ENCODE measurements at regions of chr7 and their contacts with region 1.

Region 1: DNA sequence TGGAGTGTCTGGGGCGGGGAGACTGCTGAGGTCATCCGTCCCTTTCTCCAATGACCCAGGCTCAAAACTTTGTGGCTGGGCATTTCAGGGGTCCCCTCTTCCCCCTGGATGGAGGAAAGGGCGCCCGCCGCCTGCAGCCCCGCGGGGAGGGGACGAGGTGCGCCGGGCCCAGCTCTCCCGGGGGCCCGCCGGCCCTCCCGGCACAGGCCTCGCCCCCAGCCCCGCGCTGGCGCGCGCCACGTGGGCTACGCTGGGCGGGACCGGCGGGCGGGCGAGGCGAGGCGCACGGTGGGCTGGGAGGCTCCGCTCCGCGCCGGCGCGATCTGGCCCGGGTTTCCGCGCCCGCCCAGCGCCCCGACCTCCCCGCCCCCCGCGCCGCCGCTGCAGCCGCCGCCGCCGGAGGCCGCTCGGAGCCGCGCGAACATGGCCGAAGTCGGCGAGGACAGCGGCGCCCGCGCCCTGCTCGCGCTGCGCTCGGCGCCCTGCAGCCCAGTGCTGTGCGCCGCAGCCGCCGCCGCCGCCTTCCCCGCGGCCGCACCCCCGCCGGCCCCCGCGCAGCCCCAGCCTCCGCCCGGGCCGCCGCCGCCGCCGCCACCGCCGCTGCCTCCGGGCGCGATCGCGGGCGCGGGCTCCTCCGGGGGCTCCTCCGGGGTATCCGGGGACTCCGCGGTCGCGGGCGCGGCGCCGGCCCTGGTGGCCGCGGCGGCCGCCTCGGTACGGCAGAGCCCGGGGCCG is at the start of gene FOXK1:
- DNase-seq: peak; percentile 81 to 90
- ATAC-seq: peak; percentile 72 to 90 (median 83)
- H3K4me3 ChIP-seq: peak within 1 kb of the TSS; percentile 65
- H3K4me3 Mint-ChIP-seq: peak within 1 kb of the TSS; percentile 93
- H3K27ac ChIP-seq: peak within 1 kb of the TSS; percentile 76
- H3K27ac Mint-ChIP-seq: peak within 1 kb of the TSS; percentile 94 to 96
- H3K4me1 ChIP-seq: peaks cover 39% of the 10 kb centered on the region
- H3K4me1 Mint-ChIP-seq: peaks cover 30 to 35% of the 10 kb centered on the region in 2 donors
- H3K27me3 ChIP-seq: no peaks in the 10 kb centered on the region
- H3K27me3 Mint-ChIP-seq: no peaks in the 10 kb centered on the region
- CTCF ChIP-seq: no peak
- total RNA-seq, gene FOXK1: 51.6 to 59.7 (median 55.3) TPM

Region 2: DNA sequence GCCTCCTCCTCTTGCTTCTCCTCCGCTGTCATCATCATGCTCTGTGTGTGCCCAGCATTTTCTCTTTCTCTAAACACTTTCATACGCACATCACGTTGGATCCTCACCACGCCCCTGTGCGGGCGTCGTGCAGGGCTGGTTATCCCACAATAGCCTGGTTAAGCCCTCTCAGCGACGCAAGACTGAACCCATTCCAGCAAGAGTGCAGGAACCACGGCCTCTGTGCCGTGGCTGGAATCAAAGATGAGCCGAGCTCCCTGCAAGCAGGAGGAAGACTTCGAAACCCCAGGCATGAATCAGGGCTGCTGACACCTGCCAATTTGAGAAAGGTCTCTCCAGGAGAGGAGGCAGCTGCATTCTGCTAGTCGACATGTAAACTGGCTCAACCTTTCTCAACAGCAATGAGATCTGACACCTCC is 74.7 kb before region 1 on chr7:
- intact Hi-C with region 1: no loop called
- DNase-seq: no peak
- ATAC-seq: no peak
- H3K4me3 ChIP-seq: no peak overlapping the region
- H3K4me3 Mint-ChIP-seq: no peak overlapping the region
- H3K27ac ChIP-seq: no peak overlapping the region
- H3K27ac Mint-ChIP-seq: no peak overlapping the region
- H3K4me1 ChIP-seq: peaks cover under 1% of the 10 kb centered on the region
- H3K4me1 Mint-ChIP-seq: no peaks in the 10 kb centered on the region
- H3K27me3 ChIP-seq: no peaks in the 10 kb centered on the region
- H3K27me3 Mint-ChIP-seq: peaks cover 0 to 3% of the 10 kb centered on the region in 2 donors
- CTCF ChIP-seq: no peak

Region 3: DNA sequence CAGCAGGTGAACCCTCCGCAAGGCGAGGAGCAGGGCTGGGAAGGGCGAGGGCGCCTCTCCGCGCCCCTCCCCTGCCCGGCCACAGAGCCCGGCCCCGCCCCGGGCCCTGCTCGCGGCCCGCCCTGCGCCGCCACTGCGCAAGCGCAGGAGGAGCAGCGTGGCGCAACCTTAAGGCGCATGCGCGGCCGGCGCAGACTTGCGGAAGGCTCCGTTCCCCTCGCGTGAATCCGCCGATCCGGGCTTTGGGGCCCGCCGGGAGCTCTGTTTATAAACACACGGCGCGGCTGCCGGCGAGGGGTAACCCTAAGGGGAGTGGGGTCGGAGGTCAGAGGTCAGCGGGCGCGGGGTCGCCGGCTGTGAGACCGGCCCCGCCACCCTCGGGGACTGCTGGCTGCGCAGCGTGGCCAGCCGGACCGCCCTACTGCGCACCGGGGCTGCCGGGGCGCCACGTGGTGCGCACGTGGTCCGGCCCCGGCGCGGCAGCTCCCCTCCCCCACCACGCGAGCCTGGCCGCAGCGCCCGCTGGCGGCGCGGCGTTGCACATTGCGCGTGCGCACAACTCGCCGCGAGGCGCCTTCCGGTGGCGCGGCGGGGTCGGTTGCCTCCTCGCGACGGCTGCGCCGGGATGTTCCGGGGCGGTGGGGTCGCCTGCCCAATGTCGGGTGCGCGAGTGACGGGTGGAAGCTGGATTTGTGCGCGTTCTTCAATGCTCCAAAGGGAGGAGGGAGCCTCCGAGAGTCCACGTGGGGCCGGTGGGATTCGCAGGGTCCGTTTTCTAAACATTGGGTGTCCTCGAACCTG is 40.2 kb before region 1 on chr7:
- intact Hi-C with region 1: loop called (anchors 1 kb)
- DNase-seq: peak; percentile 98 to 99
- ATAC-seq: peak; percentile 81 to 92 (median 87)
- H3K4me3 ChIP-seq: peak overlapping the region; percentile 89
- H3K4me3 Mint-ChIP-seq: peak overlapping the region; percentile 94
- H3K27ac ChIP-seq: peak overlapping the region; percentile 96
- H3K27ac Mint-ChIP-seq: peak overlapping the region; percentile 93 to 95
- H3K4me1 ChIP-seq: peaks cover 17% of the 10 kb centered on the region
- H3K4me1 Mint-ChIP-seq: peaks cover 9 to 15% of the 10 kb centered on the region in 2 donors
- H3K27me3 ChIP-seq: no peaks in the 10 kb centered on the region
- H3K27me3 Mint-ChIP-seq: peaks cover 0 to 6% of the 10 kb centered on the region in 2 donors
- CTCF ChIP-seq: peak; percentile 33

Region 4: DNA sequence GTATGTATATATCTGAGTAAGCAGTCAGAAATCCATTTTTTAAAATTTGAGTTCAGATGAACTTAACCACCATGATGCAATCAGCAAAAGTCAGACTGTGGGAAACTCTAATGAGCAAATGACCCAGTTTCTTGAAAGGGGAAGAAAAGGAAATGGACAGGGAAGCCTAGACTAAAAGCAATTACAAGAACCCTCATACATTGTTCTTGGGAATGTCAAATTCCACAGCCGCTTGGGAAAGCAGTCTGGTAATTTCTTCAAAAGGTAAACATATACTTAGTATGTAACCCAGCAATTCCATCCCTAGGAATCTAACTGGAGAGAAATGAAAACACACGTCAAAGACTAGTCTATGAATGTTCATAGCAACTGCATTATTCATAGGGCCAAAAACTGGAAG is 16.4 kb before region 1 on chr7:
- intact Hi-C with region 1: no loop called
- DNase-seq: no peak
- ATAC-seq: no peak
- H3K4me3 ChIP-seq: no peak overlapping the region
- H3K4me3 Mint-ChIP-seq: no peak overlapping the region
- H3K27ac ChIP-seq: no peak overlapping the region
- H3K27ac Mint-ChIP-seq: no peak overlapping the region
- H3K4me1 ChIP-seq: no peaks in the 10 kb centered on the region
- H3K4me1 Mint-ChIP-seq: no peaks in the 10 kb centered on the region
- H3K27me3 ChIP-seq: no peaks in the 10 kb centered on the region
- H3K27me3 Mint-ChIP-seq: no peaks in the 10 kb centered on the region
- CTCF ChIP-seq: no peak

Region 5: DNA sequence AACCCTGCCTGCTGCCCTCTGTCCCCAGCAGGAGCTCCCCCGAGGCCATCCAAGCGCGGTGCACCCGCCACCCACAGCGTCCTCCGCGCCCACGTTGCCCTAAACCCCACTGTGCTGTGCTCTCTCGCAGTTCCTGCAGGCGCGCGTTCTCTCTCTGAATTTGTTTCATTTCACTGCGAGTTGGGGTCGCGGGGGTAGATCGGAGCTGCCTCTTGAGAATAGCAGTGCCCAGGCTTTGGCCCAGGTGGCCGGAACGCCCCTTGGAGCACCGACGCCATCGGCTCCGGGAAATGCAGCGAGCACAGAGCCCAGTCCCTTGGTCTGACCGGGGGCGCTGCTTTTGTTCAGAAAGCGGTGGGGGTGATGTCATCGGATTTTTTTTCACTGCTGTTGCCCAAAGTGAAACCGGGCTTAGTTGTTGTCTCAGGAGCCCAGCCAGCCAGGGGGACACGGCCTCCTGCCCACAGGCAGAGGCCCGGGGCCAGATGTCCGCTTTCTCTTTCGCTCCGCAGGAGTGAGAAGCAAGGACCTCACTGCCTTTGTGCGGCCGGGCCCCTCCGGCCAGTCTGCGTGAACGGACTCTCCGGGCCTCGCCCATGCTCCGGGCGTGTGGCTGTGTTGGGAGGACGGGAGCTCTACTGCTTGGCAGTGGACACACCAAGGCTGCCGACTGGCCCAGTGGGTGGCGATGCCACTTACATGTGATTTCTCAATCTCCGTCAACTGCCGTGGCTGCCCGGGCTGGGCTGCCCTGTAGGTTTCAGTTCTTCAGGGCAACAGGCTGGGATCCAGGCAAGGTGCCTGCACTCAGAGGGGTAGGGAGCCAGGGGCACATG is 43.2 kb after region 1 on chr7:
- intact Hi-C with region 1: loop called (anchors 5 kb)
- DNase-seq: peak; percentile 64 to 77
- ATAC-seq: peak; percentile 84 to 88 (median 86)
- H3K4me3 ChIP-seq: peak overlapping the region; percentile 49
- H3K4me3 Mint-ChIP-seq: peak overlapping the region; percentile 95
- H3K27ac ChIP-seq: peak overlapping the region; percentile 92
- H3K27ac Mint-ChIP-seq: peak overlapping the region; percentile 96 to 97
- H3K4me1 ChIP-seq: peaks cover 29% of the 10 kb centered on the region
- H3K4me1 Mint-ChIP-seq: peaks cover 16 to 26% of the 10 kb centered on the region in 2 donors
- H3K27me3 ChIP-seq: no peaks in the 10 kb centered on the region
- H3K27me3 Mint-ChIP-seq: no peaks in the 10 kb centered on the region
- CTCF ChIP-seq: peak; percentile 10

Region 6: DNA sequence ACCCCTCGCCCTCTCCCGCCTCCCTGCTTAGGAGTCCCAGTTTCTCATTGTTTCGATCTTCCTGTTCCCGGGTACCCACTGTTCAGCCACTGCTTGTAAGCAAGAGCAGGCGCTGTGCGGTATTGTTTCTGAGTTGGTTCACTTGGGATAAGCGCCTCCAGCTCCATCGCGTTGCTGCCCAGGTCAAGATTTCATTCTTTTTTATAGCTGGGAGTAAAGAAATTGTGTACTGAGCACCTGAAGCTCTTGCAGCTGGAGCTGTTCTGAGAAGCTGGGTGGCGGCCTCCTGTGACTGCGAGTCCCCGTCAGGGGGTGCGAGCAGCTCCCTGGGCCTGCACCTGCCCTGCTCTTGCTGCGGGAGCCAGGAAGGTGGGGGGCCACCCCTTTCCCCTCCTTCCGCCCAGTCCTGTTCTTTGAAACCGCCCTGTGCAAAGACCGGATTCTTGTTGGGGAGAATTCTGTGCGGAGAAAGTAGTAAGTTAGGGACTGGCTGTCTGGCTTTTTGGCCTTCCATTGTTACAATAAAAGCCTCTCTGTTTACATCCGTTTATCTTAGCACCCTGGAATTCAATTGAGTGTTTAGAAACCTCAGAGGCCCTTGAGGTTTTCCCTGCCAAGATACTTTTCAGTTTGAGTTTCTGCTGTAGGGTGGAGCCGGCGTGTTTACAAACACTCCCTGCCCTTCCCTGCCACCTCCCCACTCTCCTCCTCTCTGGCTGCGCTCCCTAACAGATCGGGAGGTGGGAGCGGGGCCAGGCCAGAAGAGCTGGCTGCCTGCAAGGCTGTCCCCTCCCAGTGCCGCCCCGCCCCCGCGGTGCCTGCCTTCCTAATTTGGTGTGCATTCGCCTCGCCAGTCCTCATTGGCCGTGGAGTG is 62.6 kb after region 1 on chr7:
- intact Hi-C with region 1: loop called (anchors 1 kb)
- DNase-seq: peak; percentile 69 to 83
- ATAC-seq: peak; percentile 67 to 80 (median 77)
- H3K4me3 ChIP-seq: peak overlapping the region; percentile 36
- H3K4me3 Mint-ChIP-seq: peak overlapping the region; percentile 90
- H3K27ac ChIP-seq: peak overlapping the region; percentile 73
- H3K27ac Mint-ChIP-seq: peak overlapping the region; percentile 93 to 95
- H3K4me1 ChIP-seq: peaks cover 53% of the 10 kb centered on the region
- H3K4me1 Mint-ChIP-seq: peaks cover 69 to 70% of the 10 kb centered on the region in 2 donors
- H3K27me3 ChIP-seq: no peaks in the 10 kb centered on the region
- H3K27me3 Mint-ChIP-seq: no peaks in the 10 kb centered on the region
- CTCF ChIP-seq: no peak

Region 7: GRCh38 chr7:4775250-4775847 is 93.3 kb after region 1 on chr7 and contains the start of gene AP5Z1:
- intact Hi-C with region 1: loop called (anchors 1 kb)
- DNase-seq: peak; percentile 96 to 99
- ATAC-seq: peak; percentile 86 to 95 (median 89)
- H3K4me3 ChIP-seq: peak within 1 kb of the TSS; percentile 88
- H3K4me3 Mint-ChIP-seq: peak within 1 kb of the TSS; percentile 98
- H3K27ac ChIP-seq: peak within 1 kb of the TSS; percentile 97
- H3K27ac Mint-ChIP-seq: peak within 1 kb of the TSS; percentile 98 to 100
- H3K4me1 ChIP-seq: peaks cover 27% of the 10 kb centered on the region
- H3K4me1 Mint-ChIP-seq: peaks cover 31 to 41% of the 10 kb centered on the region in 2 donors
- H3K27me3 ChIP-seq: no peaks in the 10 kb centered on the region
- H3K27me3 Mint-ChIP-seq: no peaks in the 10 kb centered on the region
- CTCF ChIP-seq: no peak
- total RNA-seq, gene AP5Z1: 140 to 156 (median 143) TPM